Gastrocnemius medialis (tissue), 4 donors: ENCODE measurements at regions of chr6 and their contacts with region 1.

Region 1: DNA sequence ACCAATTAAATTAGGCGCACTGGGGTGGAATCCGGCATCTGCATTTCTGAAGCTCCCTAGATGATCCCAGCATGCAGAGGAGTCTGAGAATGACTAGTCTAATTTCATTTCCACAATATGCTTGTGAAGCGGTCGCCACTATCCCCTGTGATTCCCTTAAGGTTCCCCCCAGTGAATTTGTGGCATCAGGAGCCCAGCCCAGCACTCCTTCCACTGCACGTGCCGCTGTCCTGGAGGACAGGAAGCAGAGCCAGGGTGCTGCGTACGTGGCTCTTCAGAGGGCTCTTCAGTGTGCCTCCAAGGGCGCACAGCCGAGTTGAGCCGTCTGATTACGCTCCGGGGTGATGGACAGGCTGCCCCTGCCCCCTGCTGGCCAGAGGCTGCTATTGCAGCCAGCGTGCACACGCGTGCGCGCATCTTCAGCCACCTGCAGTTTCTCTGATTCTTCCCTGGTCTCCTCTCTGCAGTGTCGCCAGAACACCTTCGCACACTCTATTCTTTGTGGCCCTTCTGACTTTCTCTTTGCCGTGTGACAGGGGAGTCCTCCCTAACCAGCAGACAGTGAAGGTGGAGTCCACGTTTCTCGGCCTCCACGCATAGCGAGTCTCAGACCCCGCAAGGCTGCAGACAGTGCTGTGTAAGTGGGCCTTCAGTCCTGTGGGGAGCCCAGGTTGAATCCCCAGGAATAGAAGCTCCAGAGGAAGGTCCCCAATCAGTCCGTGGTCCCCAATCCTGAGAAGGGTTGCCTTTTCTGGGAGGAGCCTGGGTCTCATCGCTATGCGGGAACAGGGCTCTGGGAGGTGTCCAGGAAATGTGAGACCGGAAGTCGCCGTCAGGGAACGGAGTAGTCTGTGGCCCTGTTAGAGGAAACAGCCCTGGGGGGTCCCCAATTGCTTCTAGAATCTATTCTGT is 16.5 kb upstream of the NCR2 start:
- DNase-seq: peak; percentile 39 to 67
- ATAC-seq: peak; percentile 89 to 95
- H3K4me3 ChIP-seq: peak overlapping the region in 3 of 4 donors; percentile 26 to 52 (median 39)
- H3K27ac ChIP-seq: no peak overlapping the region
- H3K4me1 ChIP-seq: peaks cover 5 to 11% of the 10 kb centered on the region in 2 donors
- H3K27me3 ChIP-seq: peaks cover 16 to 30% (median 24%) of the 10 kb centered on the region in 3 donors
- CTCF ChIP-seq: peak; percentile 83 to 99 (median 97)
- POLR2A ChIP-seq: no peak

Region 2: GRCh38 chr6:41092421-41093140 is 226.3 kb before region 1 on chr6:
- in situ Hi-C with region 1: no loop called
- intact Hi-C with region 1: loop called (anchors 5 kb)
- DNase-seq: no peak
- ATAC-seq: no peak
- H3K4me3 ChIP-seq: no peak overlapping the region
- H3K27ac ChIP-seq: no peak overlapping the region
- H3K4me1 ChIP-seq: peaks cover 0 to 1% of the 10 kb centered on the region in 2 donors
- H3K27me3 ChIP-seq: no peaks in the 10 kb centered on the region
- CTCF ChIP-seq: no peak
- POLR2A ChIP-seq: no peak

Region 3: DNA sequence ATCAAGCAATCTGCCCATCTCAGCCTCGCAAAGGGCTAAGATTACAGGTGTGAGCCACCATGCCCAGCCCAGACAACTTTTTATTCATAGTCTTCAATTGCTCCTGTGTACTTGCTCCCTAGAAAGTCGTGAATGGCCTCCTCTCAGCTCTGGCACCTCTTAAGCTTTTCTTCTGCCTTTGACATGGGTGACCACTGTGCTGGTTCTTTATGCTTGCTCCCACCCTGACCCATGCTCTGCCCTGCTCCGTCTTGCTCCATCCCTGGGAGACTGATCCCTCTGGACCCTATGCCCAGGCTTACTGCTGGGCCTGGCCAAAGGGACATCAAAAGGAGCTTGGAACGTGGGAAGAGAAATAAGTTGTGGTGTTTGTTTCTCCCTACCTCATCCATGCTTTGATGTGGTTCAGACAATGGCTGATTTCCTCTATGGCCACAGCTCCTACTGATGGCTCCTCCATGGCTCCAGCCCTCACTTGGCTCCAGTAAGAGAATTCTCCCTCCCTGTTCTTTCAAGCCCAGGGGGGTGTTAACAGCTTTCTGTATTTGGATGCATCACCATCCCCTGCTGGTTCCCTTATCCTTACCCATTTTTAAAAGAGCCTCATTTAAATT is 148.3 kb before region 1 on chr6:
- in situ Hi-C with region 1: no loop called
- intact Hi-C with region 1: no loop called
- DNase-seq: no peak
- ATAC-seq: no peak
- H3K4me3 ChIP-seq: no peak overlapping the region
- H3K27ac ChIP-seq: no peak overlapping the region
- H3K4me1 ChIP-seq: no peaks in the 10 kb centered on the region
- H3K27me3 ChIP-seq: no peaks in the 10 kb centered on the region
- CTCF ChIP-seq: no peak
- POLR2A ChIP-seq: no peak

Region 4: GRCh38 chr6:41379306-41379705 is 60.4 kb after region 1 on chr6:
- in situ Hi-C with region 1: no loop called
- intact Hi-C with region 1: no loop called
- DNase-seq: no peak
- ATAC-seq: no peak
- H3K4me3 ChIP-seq: no peak overlapping the region
- H3K27ac ChIP-seq: no peak overlapping the region
- H3K4me1 ChIP-seq: peaks cover 13 to 15% of the 10 kb centered on the region in 2 donors
- H3K27me3 ChIP-seq: peaks cover 34 to 46% (median 34%) of the 10 kb centered on the region in 3 donors
- CTCF ChIP-seq: no peak
- POLR2A ChIP-seq: no peak